Activated naive CD8-positive, alpha-beta T cell treated with anti-CD3 and anti-CD28 coated beads, Interleukin-2, amount 10 ng/mL, durations not matched to agents 7 days and 5 days (primary cell): ENCODE measurements at regions of chr11 and their contacts with region 1.

Region 1: GRCh38 chr11:6619004-6619745 is at the start of gene TPP1:
- DNase-seq: peak; percentile 86
- ATAC-seq: peak; percentile 93
- H3K4me3 Mint-ChIP-seq: no peak within 1 kb of the TSS
- H3K27ac Mint-ChIP-seq: no peak within 1 kb of the TSS
- H3K4me1 Mint-ChIP-seq: peaks cover 5% of the 10 kb centered on the region
- H3K27me3 Mint-ChIP-seq: no peaks in the 10 kb centered on the region
- total RNA-seq, gene TPP1: 114 to 120 TPM

Region 2: GRCh38 chr11:6544921-6545850 is 74.0 kb before region 1 on chr11:
- POLR2A ChIA-PET with region 1: no interaction called
- DNase-seq: no peak
- ATAC-seq: no peak
- H3K4me3 Mint-ChIP-seq: no peak overlapping the region
- H3K27ac Mint-ChIP-seq: no peak overlapping the region
- H3K4me1 Mint-ChIP-seq: peaks cover 24% of the 10 kb centered on the region
- H3K27me3 Mint-ChIP-seq: no peaks in the 10 kb centered on the region

Region 3: DNA sequence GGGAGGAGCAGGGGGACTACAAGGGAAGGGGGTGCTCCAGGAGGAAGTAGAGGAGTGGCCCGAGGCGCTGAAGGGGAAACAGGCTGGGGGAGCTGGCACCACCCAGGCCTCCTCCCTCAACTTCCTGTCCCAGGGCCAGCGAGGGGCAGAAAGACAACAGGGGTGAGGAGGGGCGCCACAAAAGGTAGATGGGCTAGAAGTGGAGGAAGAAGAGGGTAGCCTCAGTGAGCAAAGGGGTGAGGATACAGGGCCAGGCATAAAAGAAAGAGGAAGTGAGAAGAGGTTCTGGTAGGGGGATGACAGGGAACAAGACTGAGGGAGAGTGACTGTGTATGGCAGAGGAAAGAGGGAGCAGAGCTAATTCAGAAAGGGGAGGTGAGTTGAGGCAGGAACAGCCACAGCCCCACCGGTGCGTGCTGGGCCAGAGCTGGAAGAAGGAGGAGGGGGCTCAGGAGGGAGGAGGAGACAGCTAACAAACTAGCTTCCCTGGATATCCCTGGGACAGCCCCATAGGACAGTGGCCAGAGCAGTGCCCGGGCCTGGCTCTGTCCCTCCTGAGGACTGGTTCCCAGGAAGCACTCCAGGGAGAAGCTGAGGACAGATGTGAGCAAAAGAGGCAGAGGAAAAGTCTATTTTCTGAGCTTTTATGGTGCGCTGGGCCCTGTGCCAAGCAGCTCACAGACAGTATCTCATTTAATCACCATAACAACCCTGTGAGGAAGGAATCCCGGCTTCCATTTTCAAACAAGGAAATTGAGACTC is 27.9 kb after region 1 on chr11:
- POLR2A ChIA-PET with region 1: interaction called, 16 read pairs
- DNase-seq: peak; percentile 58
- ATAC-seq: peak; percentile 69
- H3K4me3 Mint-ChIP-seq: no peak overlapping the region
- H3K27ac Mint-ChIP-seq: no peak overlapping the region
- H3K4me1 Mint-ChIP-seq: peaks cover 2% of the 10 kb centered on the region
- H3K27me3 Mint-ChIP-seq: no peaks in the 10 kb centered on the region